PC-3 (cell line): ENCODE measurements at regions of chr1 and their contacts with region 1.

Region 1: DNA sequence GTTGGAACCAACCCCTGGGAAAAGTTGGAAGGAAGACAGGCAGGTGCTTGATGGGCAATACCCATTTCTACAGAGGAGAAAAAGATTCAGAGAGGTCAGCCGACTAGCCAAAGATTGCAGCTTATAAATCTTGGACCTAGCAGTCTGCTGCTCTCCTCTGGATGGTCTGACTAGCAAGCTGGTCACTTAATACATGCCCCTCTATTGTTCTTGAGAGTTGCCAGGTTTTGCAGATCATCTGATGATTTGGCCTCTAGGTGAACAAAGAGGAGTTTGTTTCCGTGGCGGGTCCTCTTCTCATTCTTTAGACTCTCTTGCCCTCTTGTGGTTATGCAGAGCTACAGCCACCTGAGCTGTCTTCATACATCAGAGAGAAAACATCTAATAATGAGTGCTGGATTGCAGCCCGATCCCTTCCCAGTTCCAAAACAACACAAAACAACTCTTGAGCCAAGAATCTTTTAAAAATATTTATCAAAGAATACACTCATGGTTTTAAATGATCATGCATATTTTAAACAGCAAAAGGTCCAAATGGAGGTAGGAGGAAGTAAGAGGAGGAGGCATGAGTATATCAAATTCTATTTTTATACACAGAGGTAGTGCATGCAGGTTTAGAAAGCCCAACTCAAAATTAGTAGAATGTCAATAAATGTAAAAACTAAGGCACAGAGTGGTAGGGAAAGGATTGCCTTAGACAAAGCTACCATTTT is 115.7 kb downstream of the SLC30A10 start:
- DNase-seq: peak; percentile 98
- ATAC-seq: peak; percentile 91
- H3K4me3 ChIP-seq: no peak overlapping the region
- H3K27ac ChIP-seq: no peak overlapping the region
- H3K4me1 ChIP-seq: peaks cover 15% of the 10 kb centered on the region
- H3K27me3 ChIP-seq: peaks cover 44% of the 10 kb centered on the region
- CTCF ChIP-seq: peak; percentile 100

Region 2: GRCh38 chr1:218339267-218339831 is 1473.3 kb before region 1 on chr1:
- CTCF ChIA-PET with region 1: no interaction called
- POLR2A ChIA-PET with region 1: no interaction called
- intact Hi-C with region 1: loop called (anchors 2 kb)
- DNase-seq: peak; percentile 88
- ATAC-seq: peak; percentile 63
- H3K4me3 ChIP-seq: no peak overlapping the region
- H3K27ac ChIP-seq: peak overlapping the region; percentile 6
- H3K4me1 ChIP-seq: peaks cover 18% of the 10 kb centered on the region
- H3K27me3 ChIP-seq: no peaks in the 10 kb centered on the region
- CTCF ChIP-seq: peak; percentile 98

Region 3: DNA sequence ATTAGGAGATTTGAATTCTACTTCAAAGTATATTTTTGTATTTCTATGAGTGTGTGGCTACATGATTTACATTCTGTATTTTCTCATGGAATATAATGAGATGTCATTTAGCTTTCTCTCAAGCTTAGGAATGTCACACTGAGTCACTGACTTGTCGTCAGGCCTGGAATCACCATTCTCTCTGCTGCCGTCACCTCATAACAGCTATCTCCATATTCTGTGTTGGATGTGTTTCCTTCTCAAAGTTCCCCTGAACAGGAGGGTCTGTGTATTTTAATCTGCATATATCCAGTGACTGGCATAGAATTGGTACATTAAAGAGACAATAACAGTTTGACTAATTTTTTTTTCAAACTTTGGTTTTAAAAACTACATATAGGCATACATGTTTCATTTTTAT is 603.1 kb before region 1 on chr1:
- CTCF ChIA-PET with region 1: no interaction called
- POLR2A ChIA-PET with region 1: no interaction called
- intact Hi-C with region 1: loop called (anchors 2 kb)
- DNase-seq: peak; percentile 23
- ATAC-seq: peak; percentile 48
- H3K4me3 ChIP-seq: no peak overlapping the region
- H3K27ac ChIP-seq: peak overlapping the region; percentile 3
- H3K4me1 ChIP-seq: peaks cover 16% of the 10 kb centered on the region
- H3K27me3 ChIP-seq: no peaks in the 10 kb centered on the region
- CTCF ChIP-seq: no peak

Region 4: DNA sequence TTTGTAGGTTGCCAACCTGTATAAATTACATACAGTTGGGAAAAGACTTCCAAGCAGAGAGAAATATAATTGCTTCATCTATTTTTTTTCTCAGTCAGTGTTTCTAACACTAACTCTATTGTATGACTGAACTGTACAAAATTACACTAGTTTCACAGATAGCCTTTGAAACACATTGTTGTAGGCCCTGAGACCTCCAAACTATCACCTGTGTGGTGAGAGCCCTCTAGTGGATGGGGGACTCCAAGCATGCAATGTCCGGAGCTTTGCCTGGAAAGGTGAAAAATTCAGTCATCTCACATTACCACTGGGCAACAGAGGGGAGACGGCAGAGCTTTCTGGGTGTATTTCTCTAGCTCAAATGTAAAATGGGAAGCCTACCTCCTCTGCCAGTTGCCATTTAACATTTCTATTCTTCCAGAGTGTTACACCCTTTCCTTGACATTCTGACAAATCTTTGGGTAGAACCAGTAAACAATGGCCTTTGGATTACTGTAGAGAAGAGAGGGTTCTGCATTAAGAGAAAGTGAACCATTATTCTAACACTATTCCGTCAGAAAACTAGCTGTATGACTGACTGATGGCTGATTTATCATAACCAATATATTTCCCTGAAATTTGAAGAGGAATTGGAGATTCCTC is 426.7 kb before region 1 on chr1:
- CTCF ChIA-PET with region 1: interaction called, 5 read pairs
- POLR2A ChIA-PET with region 1: no interaction called
- intact Hi-C with region 1: loop called (anchors 1 kb)
- DNase-seq: peak; percentile 96
- ATAC-seq: peak; percentile 98
- H3K4me3 ChIP-seq: no peak overlapping the region
- H3K27ac ChIP-seq: no peak overlapping the region
- H3K4me1 ChIP-seq: peaks cover 4% of the 10 kb centered on the region; the same call in 1 of the 2 replicates
- H3K27me3 ChIP-seq: no peaks in the 10 kb centered on the region
- CTCF ChIP-seq: peak; percentile 99

Region 5: DNA sequence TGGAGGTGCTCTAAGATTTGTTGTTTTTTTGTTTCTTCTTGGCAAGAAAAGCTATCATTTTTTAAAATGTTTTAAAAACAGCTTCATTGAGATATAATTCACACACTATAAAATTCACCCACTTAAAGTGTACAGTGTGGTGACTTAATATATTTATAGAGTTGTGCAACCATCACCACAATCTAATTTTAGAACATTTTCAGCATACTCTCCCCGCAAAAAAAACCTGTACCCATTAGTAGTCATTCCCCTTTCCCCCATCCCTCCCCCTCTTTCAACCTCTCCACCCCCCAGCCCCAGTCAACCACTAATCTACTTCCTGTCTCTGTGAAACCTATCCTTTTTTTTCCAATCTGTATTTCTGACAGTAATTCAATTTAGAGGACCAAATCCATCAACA is 230.4 kb before region 1 on chr1:
- CTCF ChIA-PET with region 1: no interaction called
- POLR2A ChIA-PET with region 1: interaction called, 6 read pairs
- intact Hi-C with region 1: loop called (anchors 5 kb)
- DNase-seq: peak; percentile 86
- ATAC-seq: 0 out of 2 replicates have a peak, but pooled peaks have one; percentile 8
- H3K4me3 ChIP-seq: 0 out of 2 replicates have a peak overlapping the region, but pooled peaks have one; percentile 5
- H3K27ac ChIP-seq: peak overlapping the region; percentile 28
- H3K4me1 ChIP-seq: peaks cover 37% of the 10 kb centered on the region
- H3K27me3 ChIP-seq: no peaks in the 10 kb centered on the region
- CTCF ChIP-seq: no peak

Region 6: DNA sequence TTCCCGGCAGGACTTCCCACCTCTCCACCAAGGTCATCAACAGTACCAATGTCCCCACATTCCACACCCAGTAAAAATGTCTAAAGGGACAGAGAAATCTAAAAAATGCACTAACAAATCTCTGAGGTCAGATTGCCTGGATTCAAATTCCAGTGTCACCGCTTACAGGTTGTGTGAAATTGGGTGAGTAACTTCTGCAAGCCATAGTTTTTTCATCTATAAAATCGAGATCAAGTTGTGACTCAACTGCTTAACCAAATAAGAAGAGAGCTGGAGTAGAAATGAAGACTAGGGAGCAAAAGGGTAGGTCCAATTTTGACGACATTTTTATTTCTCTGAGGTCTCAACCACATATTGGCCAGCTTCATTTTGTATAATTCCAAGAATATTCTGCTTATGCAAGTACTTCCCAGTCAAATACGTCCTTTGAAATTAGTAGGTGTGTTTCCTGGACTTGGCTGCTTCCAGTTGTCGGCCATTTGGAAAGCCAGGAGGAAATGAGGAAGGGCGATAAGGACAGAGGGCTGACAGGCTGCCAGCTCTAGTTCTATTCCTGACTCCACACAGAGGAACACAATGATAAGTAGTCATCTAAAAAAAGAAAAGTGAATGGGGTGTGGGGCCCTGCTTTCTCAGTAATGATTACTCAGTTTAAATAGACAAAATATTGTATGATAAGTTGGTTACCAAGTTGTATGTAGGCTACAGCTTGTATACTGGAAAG is 142.1 kb before region 1 on chr1:
- CTCF ChIA-PET with region 1: interaction called, 15 read pairs
- POLR2A ChIA-PET with region 1: no interaction called
- intact Hi-C with region 1: loop called (anchors 1 kb)
- DNase-seq: peak; percentile 93
- ATAC-seq: peak; percentile 72
- H3K4me3 ChIP-seq: peak overlapping the region; percentile 13; the same call in 1 of the 2 replicates
- H3K27ac ChIP-seq: peak overlapping the region; percentile 84
- H3K4me1 ChIP-seq: peaks cover 45% of the 10 kb centered on the region
- H3K27me3 ChIP-seq: no peaks in the 10 kb centered on the region
- CTCF ChIP-seq: no peak

Region 7: DNA sequence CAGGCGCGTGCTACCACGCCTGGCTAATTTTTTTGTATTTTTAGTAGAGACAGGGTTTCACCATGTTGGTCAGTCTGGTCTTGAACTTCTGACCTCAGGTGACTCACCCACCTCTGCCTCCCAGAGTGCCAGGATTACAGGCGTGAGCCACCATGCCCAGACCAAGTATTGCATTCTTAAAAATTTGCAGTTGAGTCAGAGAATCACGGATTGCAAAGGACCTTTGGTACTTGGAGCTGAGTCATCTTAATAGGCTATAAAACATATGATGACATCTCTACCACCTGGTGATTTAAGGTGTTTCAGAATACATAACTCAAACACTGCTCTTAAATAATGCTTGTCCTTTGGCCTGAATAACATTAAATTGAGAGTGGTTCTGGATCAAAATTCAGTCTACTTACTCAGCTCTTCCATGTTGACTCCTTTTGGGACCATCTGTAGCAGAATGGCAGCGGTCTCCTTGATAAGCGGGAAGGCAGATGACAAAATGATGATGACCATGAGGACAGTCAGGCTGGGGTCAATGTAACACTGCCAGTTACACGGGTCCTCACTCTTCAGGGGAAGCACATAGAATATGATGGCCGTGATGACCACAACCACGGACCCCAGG is 105.3 kb after region 1 on chr1:
- CTCF ChIA-PET with region 1: no interaction called
- POLR2A ChIA-PET with region 1: no interaction called
- intact Hi-C with region 1: no loop called
- DNase-seq: peak; percentile 99
- ATAC-seq: peak; percentile 89
- H3K4me3 ChIP-seq: no peak overlapping the region
- H3K27ac ChIP-seq: peak overlapping the region; percentile 3; the same call in 1 of the 2 replicates
- H3K4me1 ChIP-seq: peaks cover 7% of the 10 kb centered on the region
- H3K27me3 ChIP-seq: no peaks in the 10 kb centered on the region
- CTCF ChIP-seq: no peak